ENCODE measurements at regions of chr6 and their contacts with region 1.

Region 1: DNA sequence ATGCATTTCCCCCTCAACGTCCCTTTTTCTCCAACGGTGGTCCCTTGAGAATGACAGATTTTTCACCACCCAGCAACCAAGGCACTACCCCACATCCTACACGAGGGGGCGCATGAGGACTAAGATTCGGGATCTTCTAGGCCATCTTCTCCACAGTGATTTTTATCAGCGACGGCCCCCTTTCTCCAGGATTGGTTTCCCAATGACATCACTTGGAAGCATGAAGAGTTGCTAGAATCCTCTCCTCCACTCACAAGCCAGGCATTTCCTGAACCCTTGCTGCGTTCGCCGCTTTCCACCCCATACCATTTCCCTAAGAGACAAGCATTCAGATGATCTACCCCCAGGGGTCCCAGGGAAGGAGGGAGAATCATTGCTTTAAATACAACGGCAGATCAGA is 252.0 kb downstream of the HIVEP2 start:
- DNase-seq: peak; percentile 45
- CTCF ChIP-seq: peak; percentile 92

Region 2: DNA sequence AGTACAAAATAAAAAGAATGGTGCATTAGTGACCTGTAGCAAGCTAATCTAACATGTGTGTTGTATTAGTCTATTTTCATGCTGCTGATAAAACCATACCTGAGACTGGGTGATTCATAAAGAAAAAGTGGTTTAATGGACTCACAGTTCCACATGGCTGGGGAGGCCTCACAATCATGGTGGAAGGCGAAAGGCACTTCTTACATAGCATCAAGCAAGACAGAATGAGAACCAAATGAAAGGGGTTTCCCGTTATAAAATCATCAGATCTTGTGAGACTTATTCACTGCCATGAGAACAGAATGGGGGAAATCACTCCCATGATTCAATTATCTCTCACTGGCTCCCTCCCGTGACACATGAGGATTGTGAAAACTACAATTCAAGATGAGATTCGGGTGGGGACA is 322.4 kb after region 1 on chr6:
- in situ Hi-C with region 1: no loop called
- DNase-seq: no peak
- CTCF ChIP-seq: no peak

Region 3: DNA sequence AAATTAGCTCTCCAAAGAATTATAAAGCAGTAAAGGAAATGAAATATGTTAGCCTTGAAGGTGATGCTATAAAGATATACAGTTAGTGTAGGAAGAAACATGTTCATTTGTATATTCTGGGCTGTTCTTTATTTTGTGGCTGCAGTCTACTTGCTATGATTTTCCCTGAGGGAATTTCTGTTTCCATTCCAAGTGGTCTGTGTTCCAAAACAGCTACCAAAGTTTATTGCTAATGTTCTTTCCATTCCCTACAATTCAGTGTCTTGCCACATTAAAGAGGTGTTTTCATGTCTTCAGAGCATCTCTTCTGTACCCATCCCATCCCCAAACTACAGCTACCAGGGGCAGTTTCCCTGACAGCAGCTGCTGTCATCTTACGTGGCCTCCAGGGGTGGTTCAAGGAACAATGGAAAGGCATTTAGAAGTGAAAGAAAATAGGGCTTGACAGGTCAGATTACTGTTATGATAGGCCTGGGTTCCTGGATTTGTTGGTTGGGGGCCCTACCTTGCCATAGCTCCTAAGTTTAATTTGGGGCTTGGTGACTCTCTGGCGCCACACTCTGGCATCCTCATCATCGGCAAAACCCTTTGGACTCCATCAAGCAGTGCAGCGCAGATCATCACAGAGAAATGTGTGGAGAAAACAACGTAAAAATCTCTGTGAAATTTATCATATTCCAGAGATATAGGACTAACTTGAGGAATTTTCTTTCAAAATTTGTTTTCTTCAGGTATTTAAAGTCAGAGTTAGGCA is 333.9 kb after region 1 on chr6:
- in situ Hi-C with region 1: loop called (anchors 25 kb)
- DNase-seq: no peak
- CTCF ChIP-seq: peak; percentile 56